Activated naive CD4-positive, alpha-beta T cell treated with anti-CD3 and anti-CD28 coated beads for 36 hours (primary cell): ENCODE measurements at regions of chr18 and their contacts with region 1.

Region 1: DNA sequence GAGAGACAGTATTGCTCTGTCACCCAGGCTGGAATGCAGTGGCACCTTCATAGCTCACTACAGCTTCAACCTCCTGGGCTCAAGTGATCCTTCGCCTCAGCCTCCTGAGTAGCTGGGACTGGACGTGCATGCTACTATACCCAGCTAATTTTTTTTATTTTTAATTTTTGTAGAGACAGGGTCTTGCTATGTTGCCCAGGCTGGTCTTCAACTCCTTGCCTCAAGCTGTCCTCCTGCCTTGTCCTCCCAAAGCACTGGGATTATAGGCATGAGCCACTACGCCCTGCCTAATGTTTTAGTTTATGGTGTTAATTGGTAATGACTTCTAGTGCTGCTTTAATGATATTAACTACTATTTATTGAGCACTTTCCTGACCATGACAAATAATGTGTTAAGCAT is 18.3 kb downstream of the RNF138 start:
- DNase-seq: no peak
- H3K4me3 Mint-ChIP-seq: no peak overlapping the region
- H3K27ac Mint-ChIP-seq: no peak overlapping the region
- H3K4me1 Mint-ChIP-seq: peaks cover 54% of the 10 kb centered on the region
- H3K27me3 Mint-ChIP-seq: no peaks in the 10 kb centered on the region

Region 2: GRCh38 chr18:32122039-32122438 is 12.0 kb after region 1 on chr18:
- CTCF ChIA-PET with region 1: no interaction called
- intact Hi-C with region 1: loop called (anchors 1 kb)
- DNase-seq: no peak
- H3K4me3 Mint-ChIP-seq: no peak overlapping the region
- H3K27ac Mint-ChIP-seq: no peak overlapping the region
- H3K4me1 Mint-ChIP-seq: peaks cover 5% of the 10 kb centered on the region
- H3K27me3 Mint-ChIP-seq: no peaks in the 10 kb centered on the region